Colonic mucosa (tissue), 4 donors: ENCODE measurements at regions of chr12 and their contacts with region 1.

Region 1: GRCh38 chr12:54359033-54359761 is 5.1 kb downstream of the GPR84 start:
- DNase-seq: peak; percentile 97
- H3K4me3 ChIP-seq: peak overlapping the region; percentile 41
- H3K27ac ChIP-seq: peak overlapping the region; percentile 75
- H3K4me1 ChIP-seq: no peaks in the 10 kb centered on the region
- H3K27me3 ChIP-seq: no peaks in the 10 kb centered on the region
- CTCF ChIP-seq: no peak

Region 2: GRCh38 chr12:53145383-53146260 is 1213.6 kb before region 1 on chr12:
- intact Hi-C with region 1: no loop called
- DNase-seq: no peak
- H3K4me3 ChIP-seq: no peak overlapping the region
- H3K27ac ChIP-seq: no peak overlapping the region
- H3K4me1 ChIP-seq: no peaks in the 10 kb centered on the region
- H3K27me3 ChIP-seq: no peaks in the 10 kb centered on the region
- CTCF ChIP-seq: no peak

Region 3: GRCh38 chr12:54005853-54006686 is 353.1 kb before region 1 on chr12:
- intact Hi-C with region 1: loop called (anchors 10 kb)
- DNase-seq: peak; percentile 87
- H3K4me3 ChIP-seq: peak overlapping the region; percentile 14
- H3K27ac ChIP-seq: no peak overlapping the region
- H3K4me1 ChIP-seq: peaks cover 7% of the 10 kb centered on the region
- H3K27me3 ChIP-seq: peaks cover 94% of the 10 kb centered on the region
- CTCF ChIP-seq: peak; percentile 88

Region 4: GRCh38 chr12:54220092-54220557 is 139.1 kb before region 1 on chr12:
- intact Hi-C with region 1: loop called (anchors 5 kb)
- DNase-seq: peak; percentile 73
- H3K4me3 ChIP-seq: no peak overlapping the region
- H3K27ac ChIP-seq: no peak overlapping the region
- H3K4me1 ChIP-seq: peaks cover 17% of the 10 kb centered on the region
- H3K27me3 ChIP-seq: peaks cover 31% of the 10 kb centered on the region
- CTCF ChIP-seq: peak; percentile 54

Region 5: GRCh38 chr12:54294152-54294952 is 64.8 kb before region 1 on chr12:
- intact Hi-C with region 1: loop called (anchors 5 kb)
- DNase-seq: peak; percentile 85
- H3K4me3 ChIP-seq: no peak overlapping the region
- H3K27ac ChIP-seq: no peak overlapping the region
- H3K4me1 ChIP-seq: no peaks in the 10 kb centered on the region
- H3K27me3 ChIP-seq: no peaks in the 10 kb centered on the region
- CTCF ChIP-seq: peak; percentile 75